GM18951 (cell line): ENCODE measurements at regions of chr16 and their contacts with region 1.

Region 1: DNA sequence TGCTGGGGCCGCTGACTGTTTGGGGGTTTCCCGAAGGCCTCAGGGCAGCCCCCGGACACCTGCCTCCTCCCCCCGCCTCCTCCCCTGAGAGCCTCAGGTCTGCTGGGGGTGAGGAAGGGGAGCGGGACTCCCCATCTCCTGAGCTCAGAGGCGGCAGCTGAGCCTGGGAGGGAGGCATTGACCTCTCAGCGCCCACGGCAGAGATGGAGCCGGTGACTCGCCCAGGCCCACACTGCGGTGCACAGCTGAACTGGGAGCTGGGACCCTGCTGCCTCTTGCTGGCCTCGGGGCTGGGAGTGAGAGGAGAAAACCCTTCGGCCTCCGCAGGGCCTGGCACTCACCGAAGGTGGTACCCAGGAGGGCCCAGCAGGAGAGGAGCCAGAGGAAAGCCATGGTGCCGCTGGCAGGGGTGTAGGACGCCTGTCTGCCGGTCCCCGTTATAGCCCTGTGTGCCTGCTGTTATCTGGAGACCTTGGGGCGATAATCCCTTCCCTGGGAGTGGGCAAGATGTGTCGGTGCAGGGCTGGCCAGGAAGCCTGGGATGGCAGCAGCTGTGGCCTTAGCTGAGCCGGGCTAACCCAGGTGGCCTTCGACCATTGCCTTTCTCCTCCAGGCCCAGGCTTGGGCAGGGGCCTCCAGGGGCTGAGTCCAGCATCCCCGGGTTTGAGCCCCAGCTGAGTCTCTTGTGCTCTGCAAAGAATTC is at the start of gene CTRB2:
- POLR2A ChIP-seq: no peak

Region 2: GRCh38 chr16:74480141-74481029 is 726.5 kb before region 1 on chr16:
- in situ Hi-C with region 1: no loop called
- POLR2A ChIP-seq: no peak

Region 3: DNA sequence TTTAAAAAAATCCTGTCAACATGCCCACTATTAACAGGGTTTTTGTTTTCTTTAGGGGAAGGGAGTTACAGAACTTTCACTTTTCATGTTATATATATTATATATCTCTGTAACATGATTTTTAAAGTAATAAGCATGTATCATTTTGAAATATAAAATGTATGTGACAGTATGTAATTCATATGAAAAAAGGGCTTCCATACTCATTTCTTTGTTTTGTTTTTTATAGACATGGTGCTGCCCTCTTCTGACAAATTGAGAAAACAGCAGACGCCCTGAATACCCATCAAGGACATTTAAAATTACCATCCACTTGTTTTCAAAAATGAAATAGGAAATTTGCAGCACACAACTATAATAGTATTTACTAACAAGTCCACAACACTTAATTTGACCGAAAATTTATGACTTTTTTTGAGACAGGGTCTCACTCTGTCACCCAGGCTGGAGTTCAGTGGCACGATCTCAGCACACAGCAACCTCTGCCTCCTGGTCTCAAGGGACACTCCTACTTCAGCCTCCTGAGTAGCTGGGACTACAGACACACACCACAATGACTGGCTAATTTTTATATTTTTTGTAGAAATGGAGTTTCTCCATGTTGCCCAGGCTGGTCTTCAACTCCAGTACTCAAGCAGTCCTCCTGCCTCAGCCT is 196.0 kb after region 1 on chr16:
- in situ Hi-C with region 1: loop called (anchors 10 kb)
- POLR2A ChIP-seq: no peak